Activated CD8-positive, alpha-beta T cell treated with anti-CD3 and anti-CD28 coated beads, Interleukin-2, amount 10 ng/mL, durations not matched to agents 7 days and 5 days (primary cell): ENCODE measurements at regions of chr4 and their contacts with region 1.

Region 1: GRCh38 chr4:38804654-38805295 is at the start of gene TLR1:
- DNase-seq: peak; percentile 32
- ATAC-seq: peak; percentile 78
- H3K4me3 Mint-ChIP-seq: peak within 1 kb of the TSS; percentile 76
- H3K27ac Mint-ChIP-seq: peak within 1 kb of the TSS; percentile 84
- H3K4me1 Mint-ChIP-seq: peaks cover 25% of the 10 kb centered on the region
- H3K27me3 Mint-ChIP-seq: no peaks in the 10 kb centered on the region
- total RNA-seq, gene TLR1: 8.1 to 9.6 TPM

Region 2: DNA sequence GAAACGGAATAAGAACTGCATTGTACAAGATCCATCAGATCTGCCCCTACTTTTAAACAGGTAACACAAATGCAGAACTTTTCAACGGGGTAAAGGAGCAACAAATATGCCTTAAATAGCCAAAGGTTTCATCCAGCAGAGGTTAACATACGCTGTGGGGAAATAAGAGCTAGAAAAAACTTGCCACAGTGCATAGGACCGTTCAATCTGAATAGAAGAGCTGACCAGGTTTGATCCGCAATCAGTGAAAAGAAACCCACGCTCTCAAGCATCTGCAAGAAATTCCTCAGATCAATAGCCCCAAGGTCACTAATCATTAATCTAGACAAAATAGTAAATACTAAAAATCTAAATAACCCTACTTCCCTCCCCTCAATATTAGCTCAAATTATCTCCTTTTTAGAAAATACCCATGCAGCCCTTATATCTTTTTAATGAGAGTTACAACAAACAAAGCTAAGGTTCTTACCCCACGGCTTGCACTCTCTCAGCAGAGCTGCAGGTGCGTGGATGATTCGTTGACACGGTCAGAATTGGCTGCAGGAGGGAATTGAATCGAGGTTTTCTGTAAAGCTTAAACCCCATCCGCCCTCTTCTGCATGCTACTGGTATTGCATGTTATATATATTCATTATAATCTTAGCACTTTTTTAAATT is 22.2 kb before region 1 on chr4 and contains the start of gene TLR10:
- CTCF ChIA-PET with region 1: interaction called, 78 read pairs
- POLR2A ChIA-PET with region 1: no interaction called
- DNase-seq: peak; percentile 64
- ATAC-seq: peak; percentile 47
- H3K4me3 Mint-ChIP-seq: no peak within 1 kb of the TSS
- H3K27ac Mint-ChIP-seq: no peak within 1 kb of the TSS
- H3K4me1 Mint-ChIP-seq: peaks cover 6% of the 10 kb centered on the region
- H3K27me3 Mint-ChIP-seq: peaks cover 5% of the 10 kb centered on the region
- total RNA-seq, gene TLR10: 0.08 TPM in 1 of 2 experiments, not detected in the other

Region 3: DNA sequence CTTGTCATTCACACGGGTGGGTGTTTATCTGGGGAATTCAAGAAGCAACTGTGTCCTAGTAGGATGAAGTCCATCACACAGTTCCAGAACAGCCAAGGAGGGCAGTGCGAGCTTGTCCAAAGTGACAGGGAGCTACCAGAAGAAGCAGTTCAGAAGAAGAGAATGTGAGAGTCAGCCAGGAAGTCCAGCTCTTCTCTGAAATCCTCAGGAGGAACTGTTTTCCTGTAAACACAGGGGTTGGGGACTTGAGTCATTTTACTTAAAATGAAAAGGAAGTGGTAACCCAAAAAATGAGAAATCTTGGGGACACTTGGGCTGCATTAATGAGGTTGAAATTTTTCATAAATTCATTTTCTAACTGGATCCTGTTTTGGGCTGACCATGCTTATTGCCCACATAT is 13.8 kb before region 1 on chr4:
- CTCF ChIA-PET with region 1: interaction called, 78 read pairs
- POLR2A ChIA-PET with region 1: interaction called, 4 read pairs
- DNase-seq: no peak
- ATAC-seq: no peak
- H3K4me3 Mint-ChIP-seq: no peak overlapping the region
- H3K27ac Mint-ChIP-seq: peak overlapping the region; percentile 61
- H3K4me1 Mint-ChIP-seq: peaks cover 14% of the 10 kb centered on the region
- H3K27me3 Mint-ChIP-seq: no peaks in the 10 kb centered on the region

Region 4: GRCh38 chr4:39205000-39205399 is 400.2 kb after region 1 on chr4:
- CTCF ChIA-PET with region 1: no interaction called
- POLR2A ChIA-PET with region 1: no interaction called
- DNase-seq: no peak
- ATAC-seq: no peak
- H3K4me3 Mint-ChIP-seq: no peak overlapping the region
- H3K27ac Mint-ChIP-seq: no peak overlapping the region
- H3K4me1 Mint-ChIP-seq: no peaks in the 10 kb centered on the region
- H3K27me3 Mint-ChIP-seq: no peaks in the 10 kb centered on the region